Activated T-helper 1 cell treated with anti-CD3 and anti-CD28 coated beads, Interleukin-12 subunit alpha, Interleukin-12 subunit beta, Interleukin-2, Interleukin-4 antibody, amounts not matched to agents 30 ng/mL and 10 ng/mL and 1 ng/mL, durations not matched to agents 14 hours and 24 hours and 36 hours (primary cell): ENCODE measurements at regions of chr7 and their contacts with region 1.

Region 1: DNA sequence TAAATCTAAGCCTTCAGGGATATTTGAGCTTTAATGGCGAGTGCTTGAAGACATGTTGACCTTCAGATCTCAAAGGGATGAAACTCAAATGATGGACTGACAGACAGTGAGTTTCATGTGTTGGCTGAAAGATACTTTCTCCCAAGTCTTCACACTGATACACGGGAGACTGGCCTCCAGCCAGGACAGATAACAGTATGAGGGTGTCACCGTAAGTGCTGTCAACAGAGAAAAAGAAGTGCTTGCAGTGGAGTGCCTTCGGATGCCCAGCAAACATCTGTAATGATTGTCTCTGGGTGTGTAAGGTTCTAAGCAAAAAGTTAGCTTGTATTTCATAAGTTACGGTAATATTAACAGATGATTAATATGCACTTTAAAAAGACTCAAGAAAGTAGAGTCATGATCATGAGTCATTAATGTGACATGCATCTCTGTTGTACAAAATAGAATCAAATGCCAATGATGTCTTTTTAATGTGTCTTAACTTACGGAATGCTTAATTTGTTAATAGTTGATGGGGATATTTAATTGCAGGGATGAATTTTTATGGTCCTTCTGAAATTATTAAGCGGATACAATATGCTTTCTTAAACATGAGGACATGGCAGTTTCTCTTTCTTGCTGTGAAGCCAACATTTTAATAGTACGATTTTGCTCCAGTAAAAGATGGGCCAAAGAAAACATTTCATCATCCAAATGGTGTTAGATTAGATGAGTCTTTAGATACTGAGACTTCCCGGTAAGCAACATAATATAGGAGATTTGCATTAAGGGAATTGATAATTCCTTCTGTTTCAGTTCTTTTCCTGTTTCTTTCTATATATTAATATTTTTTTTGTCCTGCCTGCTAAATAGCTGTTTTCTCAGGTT is 292.5 kb downstream of the GALNT17 start:
- DNase-seq: no peak
- H3K4me3 Mint-ChIP-seq: no peak overlapping the region
- H3K27ac Mint-ChIP-seq: no peak overlapping the region
- H3K4me1 Mint-ChIP-seq: no peaks in the 10 kb centered on the region
- H3K27me3 Mint-ChIP-seq: no peaks in the 10 kb centered on the region

Region 2: DNA sequence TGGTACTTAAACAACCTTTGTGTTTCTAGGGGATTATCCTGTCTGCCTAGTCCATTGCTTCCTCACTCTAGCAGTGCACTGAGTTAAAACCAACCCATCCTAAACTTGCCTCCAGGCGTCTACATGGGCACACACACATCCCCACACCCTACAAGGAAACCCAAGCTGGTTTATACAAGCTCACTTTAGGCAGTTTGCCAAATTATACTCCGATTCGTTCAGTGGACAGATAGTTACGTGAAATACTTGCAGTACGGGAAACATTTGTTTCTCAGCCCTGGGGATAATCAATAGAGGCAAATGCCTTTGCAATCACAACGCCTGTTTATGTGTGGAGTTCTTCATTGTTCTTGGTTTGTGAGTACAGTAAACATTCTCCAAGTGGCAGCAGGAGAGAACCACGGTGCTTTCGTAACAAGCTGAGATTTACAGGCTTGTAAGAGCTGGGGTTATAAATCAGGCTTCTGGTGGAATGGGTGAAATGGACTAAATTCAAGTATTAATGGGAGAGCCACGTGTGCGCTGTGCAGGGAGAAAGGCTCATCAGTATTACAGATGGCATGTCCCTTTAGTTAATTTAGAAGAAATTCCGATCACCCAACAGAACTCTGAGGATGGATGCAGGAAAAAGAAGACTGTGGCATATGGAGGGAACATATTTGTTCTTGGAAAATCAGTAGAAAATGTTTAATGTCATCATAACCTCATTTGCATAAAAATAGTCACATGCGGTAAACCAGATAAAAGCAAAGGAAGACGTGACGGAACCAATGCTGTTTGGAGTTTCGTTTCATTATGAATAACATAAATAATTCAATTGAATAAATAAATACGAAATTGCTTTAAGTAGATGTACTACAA is 75.3 kb before region 1 on chr7:
- intact Hi-C with region 1: loop called (anchors 10 kb)
- DNase-seq: no peak
- H3K4me3 Mint-ChIP-seq: no peak overlapping the region
- H3K27ac Mint-ChIP-seq: no peak overlapping the region
- H3K4me1 Mint-ChIP-seq: no peaks in the 10 kb centered on the region
- H3K27me3 Mint-ChIP-seq: no peaks in the 10 kb centered on the region

Region 3: GRCh38 chr7:71408271-71408670 is 16.1 kb before region 1 on chr7:
- intact Hi-C with region 1: no loop called
- DNase-seq: no peak
- H3K4me3 Mint-ChIP-seq: no peak overlapping the region
- H3K27ac Mint-ChIP-seq: no peak overlapping the region
- H3K4me1 Mint-ChIP-seq: no peaks in the 10 kb centered on the region
- H3K27me3 Mint-ChIP-seq: no peaks in the 10 kb centered on the region

Region 4: DNA sequence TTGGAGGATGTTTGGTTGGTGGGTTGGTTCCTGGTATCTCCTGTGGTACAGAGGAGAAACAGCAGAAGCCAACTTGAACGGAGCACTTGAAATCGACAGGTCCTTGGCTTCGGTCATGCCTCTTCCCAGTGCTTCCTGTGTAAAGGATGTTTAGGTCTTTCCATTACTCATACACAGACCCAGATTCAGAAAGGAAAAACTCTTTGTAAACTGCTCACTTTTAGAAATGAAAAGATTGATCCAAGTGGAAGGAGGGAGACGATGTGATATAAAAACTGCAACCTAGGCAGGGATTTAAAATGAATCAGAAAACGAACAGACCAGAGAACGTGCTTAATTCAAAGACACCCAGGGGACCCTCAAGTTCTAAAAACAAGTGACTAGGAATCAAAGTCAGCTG is 45.9 kb after region 1 on chr7:
- intact Hi-C with region 1: no loop called
- DNase-seq: no peak
- H3K4me3 Mint-ChIP-seq: no peak overlapping the region
- H3K27ac Mint-ChIP-seq: no peak overlapping the region
- H3K4me1 Mint-ChIP-seq: no peaks in the 10 kb centered on the region
- H3K27me3 Mint-ChIP-seq: no peaks in the 10 kb centered on the region

Region 5: GRCh38 chr7:71486856-71487628 is 62.6 kb after region 1 on chr7:
- intact Hi-C with region 1: loop called (anchors 10 kb)
- DNase-seq: no peak
- H3K4me3 Mint-ChIP-seq: no peak overlapping the region
- H3K27ac Mint-ChIP-seq: no peak overlapping the region
- H3K4me1 Mint-ChIP-seq: no peaks in the 10 kb centered on the region
- H3K27me3 Mint-ChIP-seq: no peaks in the 10 kb centered on the region

Region 6: DNA sequence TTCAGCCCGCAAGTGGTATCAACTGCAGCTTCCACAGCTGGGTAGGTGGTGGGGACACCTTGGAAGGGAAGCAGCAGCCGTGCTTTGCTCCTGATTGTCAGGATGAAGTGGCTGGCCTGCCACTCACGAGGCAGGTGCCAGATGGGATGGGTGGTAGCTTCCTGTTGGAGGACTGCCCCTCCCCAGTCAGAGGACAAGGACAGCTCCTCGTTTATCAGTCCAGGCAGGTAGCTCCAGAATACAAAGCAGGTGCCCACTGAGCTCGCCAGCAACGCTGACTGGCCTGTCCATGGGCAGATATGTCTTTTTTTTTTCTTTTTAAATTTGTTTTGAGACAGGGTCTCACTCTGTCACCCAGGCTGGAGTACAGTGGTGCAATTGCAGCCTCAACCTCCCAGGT is 138.9 kb after region 1 on chr7:
- intact Hi-C with region 1: no loop called
- DNase-seq: no peak
- H3K4me3 Mint-ChIP-seq: no peak overlapping the region
- H3K27ac Mint-ChIP-seq: no peak overlapping the region
- H3K4me1 Mint-ChIP-seq: no peaks in the 10 kb centered on the region
- H3K27me3 Mint-ChIP-seq: no peaks in the 10 kb centered on the region